Esophagus squamous epithelium (tissue), 5 donors: ENCODE measurements at regions of chr11 and their contacts with region 1.

Region 1: GRCh38 chr11:26297189-26297975 is 34.5 kb upstream of the ANO3 start:
- DNase-seq: no peak
- H3K4me3 ChIP-seq: no peak overlapping the region
- H3K27ac ChIP-seq: no peak overlapping the region
- H3K4me1 ChIP-seq: peaks cover 0 to 8% (median 4%) of the 10 kb centered on the region in 3 donors
- H3K27me3 ChIP-seq: peaks cover 0 to 5% (median 0%) of the 10 kb centered on the region in 4 donors
- CTCF ChIP-seq: peak in 5 of 6 experiments; percentile 51 to 83 (median 64)
- POLR2A ChIP-seq: no peak

Region 2: DNA sequence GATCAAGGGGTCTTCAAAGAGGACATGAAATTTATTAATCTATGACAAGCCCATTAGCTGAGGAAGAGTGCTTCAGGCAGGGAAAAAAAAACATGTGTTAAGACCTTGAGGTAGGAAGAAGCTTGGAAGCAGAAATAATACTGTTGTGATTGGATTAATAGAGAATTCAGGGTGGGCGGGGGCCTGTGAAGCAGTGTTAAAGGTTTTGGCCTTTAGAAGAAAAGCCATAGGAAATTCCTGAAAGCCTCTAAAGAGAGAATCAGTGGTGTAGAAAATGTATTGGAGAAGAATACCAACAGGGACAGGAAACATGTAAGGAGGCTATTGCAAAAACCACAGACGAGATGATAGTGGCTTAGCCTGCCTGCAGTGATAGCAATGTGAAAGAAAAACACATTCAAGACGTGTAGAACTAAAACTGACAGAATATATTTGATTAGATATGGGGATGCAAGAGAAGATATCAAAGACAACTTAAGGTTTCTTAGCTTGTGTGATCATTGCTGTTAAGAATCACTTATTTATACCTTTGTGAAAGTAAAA is 369.9 kb before region 1 on chr11:
- intact Hi-C with region 1: no loop called
- DNase-seq: no peak
- H3K4me3 ChIP-seq: no peak overlapping the region
- H3K27ac ChIP-seq: no peak overlapping the region
- H3K4me1 ChIP-seq: no peaks in the 10 kb centered on the region
- H3K27me3 ChIP-seq: no peaks in the 10 kb centered on the region
- CTCF ChIP-seq: no peak
- POLR2A ChIP-seq: no peak

Region 3: GRCh38 chr11:26649884-26650283 is 352.5 kb after region 1 on chr11:
- intact Hi-C with region 1: loop called (anchors 10 kb)
- DNase-seq: no peak
- H3K4me3 ChIP-seq: no peak overlapping the region
- H3K27ac ChIP-seq: no peak overlapping the region
- H3K4me1 ChIP-seq: no peaks in the 10 kb centered on the region
- H3K27me3 ChIP-seq: peaks cover 0 to 19% (median 0%) of the 10 kb centered on the region in 4 donors
- CTCF ChIP-seq: peak; percentile 34 to 79 (median 64)
- POLR2A ChIP-seq: no peak